Activated T-helper 1 cell treated with anti-CD3 and anti-CD28 coated beads, Interleukin-12 subunit alpha, Interleukin-12 subunit beta, Interleukin-2, Interleukin-4 antibody, amounts not matched to agents 30 ng/mL and 10 ng/mL and 1 ng/mL, durations not matched to agents 14 hours and 24 hours and 36 hours (primary cell): ENCODE measurements at regions of chr4 and their contacts with region 1.

Region 1: GRCh38 chr4:151099229-151099975 is at the start of gene RPS3A:
- DNase-seq: peak; percentile 98
- H3K4me3 Mint-ChIP-seq: peak within 1 kb of the TSS; percentile 97
- H3K27ac Mint-ChIP-seq: peak within 1 kb of the TSS; percentile 98
- H3K4me1 Mint-ChIP-seq: peaks cover 56% of the 10 kb centered on the region
- H3K27me3 Mint-ChIP-seq: peaks cover 3% of the 10 kb centered on the region
- total RNA-seq, gene RPS3A: 1,686 and 1,760 TPM in 2 replicates

Region 2: DNA sequence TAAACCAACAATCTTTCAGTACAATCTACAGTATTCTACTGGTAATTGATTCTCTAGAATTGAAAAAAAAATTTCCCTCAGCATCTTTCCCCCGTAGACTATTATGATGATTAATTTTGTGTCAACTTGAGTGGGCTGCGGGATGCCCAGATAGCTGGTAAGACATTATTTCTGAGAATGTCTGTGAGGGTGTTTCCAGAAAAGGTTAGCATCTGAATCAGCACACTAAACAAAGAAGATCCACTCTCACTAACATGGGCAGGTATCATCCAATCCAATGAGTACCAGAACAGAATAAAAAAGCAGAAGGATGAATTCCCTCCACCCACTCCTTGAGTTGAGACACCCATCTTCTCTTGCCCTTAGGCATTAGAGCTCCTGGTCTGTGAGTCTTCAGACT is 703.5 kb before region 1 on chr4:
- intact Hi-C with region 1: loop called (anchors 1 kb)
- DNase-seq: no peak
- H3K4me3 Mint-ChIP-seq: no peak overlapping the region
- H3K27ac Mint-ChIP-seq: peak overlapping the region; percentile 87
- H3K4me1 Mint-ChIP-seq: peaks cover 15% of the 10 kb centered on the region
- H3K27me3 Mint-ChIP-seq: no peaks in the 10 kb centered on the region

Region 3: GRCh38 chr4:150708004-150708403 is 391.4 kb before region 1 on chr4:
- intact Hi-C with region 1: no loop called
- DNase-seq: no peak
- H3K4me3 Mint-ChIP-seq: no peak overlapping the region
- H3K27ac Mint-ChIP-seq: no peak overlapping the region
- H3K4me1 Mint-ChIP-seq: no peaks in the 10 kb centered on the region
- H3K27me3 Mint-ChIP-seq: no peaks in the 10 kb centered on the region

Region 4: DNA sequence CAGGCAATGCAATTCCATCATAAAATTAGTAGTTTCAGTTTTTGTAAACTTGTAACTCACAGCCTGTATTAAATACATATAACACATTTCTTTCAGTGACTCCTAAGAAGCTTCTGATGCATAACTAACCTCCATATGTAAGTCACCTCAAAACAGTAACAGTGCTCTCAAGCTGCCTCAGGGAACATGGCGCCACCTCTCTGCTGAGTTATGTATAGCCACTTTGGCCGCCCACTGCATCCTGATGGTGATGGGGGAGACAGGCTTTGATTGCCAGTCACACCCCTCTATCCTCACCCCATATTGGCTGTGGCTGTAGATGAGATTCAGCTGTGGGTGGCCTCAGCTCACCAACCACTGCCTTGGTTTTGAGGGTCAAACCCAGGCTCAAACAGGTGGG is 138.6 kb before region 1 on chr4:
- intact Hi-C with region 1: loop called (anchors 2 kb)
- DNase-seq: no peak
- H3K4me3 Mint-ChIP-seq: no peak overlapping the region
- H3K27ac Mint-ChIP-seq: no peak overlapping the region
- H3K4me1 Mint-ChIP-seq: peaks cover 35% of the 10 kb centered on the region
- H3K27me3 Mint-ChIP-seq: no peaks in the 10 kb centered on the region

Region 5: DNA sequence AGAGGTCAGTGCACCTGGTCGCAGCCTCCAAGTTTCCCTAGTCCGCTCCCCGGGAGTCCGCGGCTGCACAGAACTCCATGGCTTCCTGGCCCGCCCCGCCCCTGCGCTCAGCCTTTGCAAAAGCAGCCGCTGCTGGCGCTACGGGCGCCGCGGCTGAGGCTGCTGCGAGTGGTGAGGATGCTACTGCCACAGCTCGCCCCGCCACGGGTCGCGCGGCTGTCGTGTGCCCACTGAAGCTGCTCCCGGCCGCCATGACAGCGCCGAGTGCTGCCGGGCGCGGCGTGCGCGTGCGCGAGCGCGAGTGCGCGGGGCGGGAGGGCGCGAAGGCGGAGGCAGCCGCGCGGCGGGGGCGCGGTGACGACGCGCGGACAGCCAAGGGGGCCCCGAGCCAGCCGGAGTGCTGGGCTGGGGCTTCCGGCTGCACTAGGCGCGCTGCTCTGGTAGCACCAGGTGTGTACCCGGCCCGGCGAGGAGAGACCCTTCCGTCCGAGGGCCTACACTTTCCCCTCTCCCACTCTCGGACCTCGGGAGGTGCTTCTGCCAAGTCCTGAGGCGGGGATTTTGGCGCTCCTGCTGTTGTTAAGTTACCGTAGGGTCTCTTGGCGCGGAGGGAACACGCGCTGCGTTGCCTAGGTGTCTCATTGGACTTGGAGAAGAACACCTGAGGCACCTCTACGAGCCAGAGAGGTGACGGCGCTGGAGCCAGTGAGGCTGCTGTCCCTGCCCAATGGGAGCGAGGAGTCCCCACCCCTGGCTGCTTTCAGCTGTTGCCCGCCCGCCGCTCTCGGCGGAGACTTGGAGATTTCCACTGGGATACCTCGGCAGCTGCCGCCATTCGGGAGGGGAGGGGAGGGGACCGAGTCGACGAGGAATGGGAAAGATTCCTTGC is 83.7 kb before region 1 on chr4:
- intact Hi-C with region 1: loop called (anchors 1 kb)
- DNase-seq: peak; percentile 79
- H3K4me3 Mint-ChIP-seq: peak overlapping the region; percentile 100
- H3K27ac Mint-ChIP-seq: peak overlapping the region; percentile 99
- H3K4me1 Mint-ChIP-seq: peaks cover 34% of the 10 kb centered on the region
- H3K27me3 Mint-ChIP-seq: no peaks in the 10 kb centered on the region

Region 6: DNA sequence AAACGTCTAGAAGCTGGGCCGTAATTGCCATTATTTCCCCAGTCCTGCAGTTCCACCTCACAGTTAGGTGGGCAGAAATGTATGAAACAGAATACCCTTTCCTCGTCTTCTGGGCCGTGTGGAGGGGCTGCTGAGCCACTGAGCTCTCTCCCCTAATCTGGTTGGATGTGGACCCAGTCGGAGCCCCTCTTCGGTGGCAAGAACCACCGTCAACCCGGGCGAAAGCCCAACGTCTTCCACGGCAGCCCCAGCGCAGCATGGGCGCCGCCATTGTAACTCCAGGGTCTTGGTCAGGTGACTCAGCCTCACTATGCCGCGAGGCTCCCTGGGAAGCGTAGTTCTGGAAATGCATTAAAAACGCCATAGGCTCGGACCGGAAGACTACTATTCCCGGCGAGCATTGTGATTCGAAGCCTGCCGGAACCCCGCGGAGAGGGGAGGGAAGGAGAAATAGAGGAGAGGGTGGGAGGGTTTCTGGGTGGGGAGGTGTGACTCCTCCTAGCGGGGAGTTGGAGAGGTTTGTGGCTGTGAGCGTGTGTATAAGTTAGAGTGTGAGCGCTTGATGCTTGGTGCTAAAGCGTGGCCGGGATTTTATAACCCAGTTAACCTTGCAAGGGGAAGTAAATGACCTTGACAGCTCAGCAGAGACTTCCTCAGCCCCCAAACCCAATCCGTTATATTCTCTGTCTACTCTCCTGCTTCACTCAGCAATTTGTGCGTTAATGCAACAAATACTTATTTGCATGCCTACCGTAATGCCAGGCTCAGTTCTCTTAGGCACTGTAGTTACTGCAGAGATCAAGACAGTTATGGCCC is 661.5 kb after region 1 on chr4 and contains the start of gene GATB:
- intact Hi-C with region 1: loop called (anchors 1 kb)
- DNase-seq: peak; percentile 88
- H3K4me3 Mint-ChIP-seq: peak within 1 kb of the TSS; percentile 98
- H3K27ac Mint-ChIP-seq: peak within 1 kb of the TSS; percentile 97
- H3K4me1 Mint-ChIP-seq: peaks cover 21% of the 10 kb centered on the region
- H3K27me3 Mint-ChIP-seq: peaks cover 6% of the 10 kb centered on the region
- total RNA-seq, gene GATB: 16.1 and 20.0 TPM in 2 replicates

Region 7: GRCh38 chr4:152556283-152556682 is 1456.9 kb after region 1 on chr4:
- intact Hi-C with region 1: loop called (anchors 5 kb)
- DNase-seq: no peak
- H3K4me3 Mint-ChIP-seq: peak overlapping the region; percentile 41
- H3K27ac Mint-ChIP-seq: peak overlapping the region; percentile 77
- H3K4me1 Mint-ChIP-seq: peaks cover 43% of the 10 kb centered on the region
- H3K27me3 Mint-ChIP-seq: no peaks in the 10 kb centered on the region